ENCODE measurements at regions of chr14 and their contacts with region 1.

Region 1: GRCh38 chr14:50631408-50631821 is 36.7 kb downstream of the SAV1 start:
- DNase-seq: no peak
- ATAC-seq: no peak
- H3K4me3 ChIP-seq: no peak overlapping the region
- H3K4me3 Mint-ChIP-seq: no peak overlapping the region
- H3K27ac ChIP-seq: no peak overlapping the region
- H3K27ac Mint-ChIP-seq: no peak overlapping the region
- H3K4me1 ChIP-seq: no peaks in the 10 kb centered on the region
- H3K4me1 Mint-ChIP-seq: no peaks in the 10 kb centered on the region
- H3K27me3 ChIP-seq: no peaks in the 10 kb centered on the region
- H3K27me3 Mint-ChIP-seq: no peaks in the 10 kb centered on the region
- CTCF ChIP-seq: no peak

Region 2: DNA sequence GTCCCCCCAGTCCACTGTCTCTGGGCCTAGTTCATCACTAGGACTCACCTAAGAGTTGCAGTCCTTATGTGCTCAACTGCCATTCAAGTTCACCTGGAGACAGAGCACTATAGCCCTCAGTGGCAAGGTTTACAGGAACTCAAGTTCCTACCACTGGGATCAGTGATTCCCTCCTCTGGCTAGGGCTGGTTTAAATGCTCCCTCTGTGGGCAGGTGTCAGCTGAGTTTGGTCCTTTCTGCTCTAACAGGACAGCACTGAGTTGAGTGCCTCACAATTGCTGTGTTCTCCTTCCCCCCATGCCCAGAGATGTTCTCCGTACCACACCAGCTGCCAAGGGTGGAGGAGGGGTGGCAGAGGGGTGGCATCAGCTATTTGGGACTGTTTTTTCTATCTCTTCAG is 57.5 kb after region 1 on chr14:
- CTCF ChIA-PET with region 1: no interaction called
- POLR2A ChIA-PET with region 1: no interaction called
- intact Hi-C with region 1: loop called in 1 of 2 experiments (anchors 2 kb)
- DNase-seq: no peak
- ATAC-seq: no peak
- H3K4me3 ChIP-seq: no peak overlapping the region
- H3K4me3 Mint-ChIP-seq: no peak overlapping the region
- H3K27ac ChIP-seq: no peak overlapping the region
- H3K27ac Mint-ChIP-seq: no peak overlapping the region
- H3K4me1 ChIP-seq: no peaks in the 10 kb centered on the region
- H3K4me1 Mint-ChIP-seq: no peaks in the 10 kb centered on the region
- H3K27me3 ChIP-seq: no peaks in the 10 kb centered on the region
- H3K27me3 Mint-ChIP-seq: peaks cover 4% of the 10 kb centered on the region
- CTCF ChIP-seq: no peak

Region 3: DNA sequence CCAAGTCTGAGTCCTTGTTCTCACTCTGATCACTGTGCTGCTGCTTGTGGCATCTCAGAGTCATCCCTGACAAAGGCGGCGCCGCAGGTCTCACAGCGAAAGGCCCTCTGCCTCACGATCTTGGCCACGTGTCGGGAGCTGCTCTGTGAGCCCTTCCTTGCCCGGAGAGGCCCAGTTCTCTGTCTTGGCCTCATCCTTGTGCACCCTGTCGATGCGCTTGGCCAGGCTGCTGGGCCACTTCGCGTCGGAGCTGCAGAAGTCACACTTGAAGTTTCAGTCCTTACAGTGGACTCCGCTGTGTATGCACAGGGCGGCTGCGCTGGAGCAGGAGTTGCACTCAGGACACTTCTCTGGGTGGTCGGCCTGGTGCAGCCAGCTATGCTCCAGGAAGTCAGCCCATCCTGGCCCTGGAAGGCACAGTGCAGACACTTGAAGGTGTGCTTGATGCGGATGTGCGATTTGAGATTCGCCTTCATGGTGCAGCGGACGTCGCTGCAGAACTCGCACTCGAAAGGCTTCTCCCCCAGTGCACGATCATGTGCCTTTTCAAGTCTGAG is 73.1 kb after region 1 on chr14:
- CTCF ChIA-PET with region 1: no interaction called
- POLR2A ChIA-PET with region 1: no interaction called
- intact Hi-C with region 1: no loop called
- DNase-seq: no peak
- ATAC-seq: no peak
- H3K4me3 ChIP-seq: no peak overlapping the region
- H3K4me3 Mint-ChIP-seq: no peak overlapping the region
- H3K27ac ChIP-seq: no peak overlapping the region
- H3K27ac Mint-ChIP-seq: no peak overlapping the region
- H3K4me1 ChIP-seq: no peaks in the 10 kb centered on the region
- H3K4me1 Mint-ChIP-seq: no peaks in the 10 kb centered on the region
- H3K27me3 ChIP-seq: peaks cover 0 to 3% of the 10 kb centered on the region in 2 experiments
- H3K27me3 Mint-ChIP-seq: peaks cover 6% of the 10 kb centered on the region
- CTCF ChIP-seq: no peak

Region 4: DNA sequence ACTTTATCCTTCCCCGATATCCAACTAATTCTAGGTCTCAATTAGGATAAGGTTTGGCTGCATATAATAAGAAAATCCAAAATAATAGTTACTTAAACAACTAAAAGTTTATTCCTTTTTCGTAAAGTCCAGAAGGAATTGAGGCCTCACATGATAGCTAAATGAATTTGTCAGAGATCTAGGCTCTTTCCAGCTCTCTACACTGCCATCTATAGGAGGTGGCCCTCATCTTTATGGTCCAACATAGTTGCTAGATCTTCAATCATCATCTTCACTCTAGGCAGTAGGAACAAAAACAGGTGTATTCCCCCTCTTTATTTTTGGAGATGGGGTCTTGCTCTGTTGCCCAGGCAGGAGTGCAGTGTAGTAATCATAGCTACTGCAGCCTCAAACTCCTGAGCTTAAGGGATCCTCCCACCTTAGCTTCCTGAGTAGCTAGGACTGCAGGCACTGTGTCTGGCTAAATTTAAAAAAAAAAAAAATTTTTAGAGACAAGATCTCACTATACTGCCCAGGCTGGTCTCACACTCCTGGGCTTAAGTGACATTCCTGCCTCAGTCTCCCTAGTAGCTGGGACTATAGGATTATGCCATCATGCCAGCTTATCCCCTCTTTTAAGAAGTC is 83.1 kb after region 1 on chr14:
- CTCF ChIA-PET with region 1: no interaction called
- POLR2A ChIA-PET with region 1: no interaction called
- intact Hi-C with region 1: loop called in 1 of 2 experiments (anchors 5 kb)
- DNase-seq: peak in 2 of 9 experiments; percentile 30 to 43
- ATAC-seq: no peak
- H3K4me3 ChIP-seq: no peak overlapping the region
- H3K4me3 Mint-ChIP-seq: no peak overlapping the region
- H3K27ac ChIP-seq: no peak overlapping the region
- H3K27ac Mint-ChIP-seq: no peak overlapping the region
- H3K4me1 ChIP-seq: no peaks in the 10 kb centered on the region
- H3K4me1 Mint-ChIP-seq: no peaks in the 10 kb centered on the region
- H3K27me3 ChIP-seq: no peaks in the 10 kb centered on the region
- H3K27me3 Mint-ChIP-seq: peaks cover 8% of the 10 kb centered on the region
- CTCF ChIP-seq: peak; percentile 40